GM13977 (cell line): ENCODE measurements at regions of chr5 and their contacts with region 1.

Region 1: GRCh38 chr5:108919591-108920326 is 172.1 kb downstream of the FER start:
- DNase-seq: peak; percentile 22
- CTCF ChIP-seq: peak; percentile 30

Region 2: DNA sequence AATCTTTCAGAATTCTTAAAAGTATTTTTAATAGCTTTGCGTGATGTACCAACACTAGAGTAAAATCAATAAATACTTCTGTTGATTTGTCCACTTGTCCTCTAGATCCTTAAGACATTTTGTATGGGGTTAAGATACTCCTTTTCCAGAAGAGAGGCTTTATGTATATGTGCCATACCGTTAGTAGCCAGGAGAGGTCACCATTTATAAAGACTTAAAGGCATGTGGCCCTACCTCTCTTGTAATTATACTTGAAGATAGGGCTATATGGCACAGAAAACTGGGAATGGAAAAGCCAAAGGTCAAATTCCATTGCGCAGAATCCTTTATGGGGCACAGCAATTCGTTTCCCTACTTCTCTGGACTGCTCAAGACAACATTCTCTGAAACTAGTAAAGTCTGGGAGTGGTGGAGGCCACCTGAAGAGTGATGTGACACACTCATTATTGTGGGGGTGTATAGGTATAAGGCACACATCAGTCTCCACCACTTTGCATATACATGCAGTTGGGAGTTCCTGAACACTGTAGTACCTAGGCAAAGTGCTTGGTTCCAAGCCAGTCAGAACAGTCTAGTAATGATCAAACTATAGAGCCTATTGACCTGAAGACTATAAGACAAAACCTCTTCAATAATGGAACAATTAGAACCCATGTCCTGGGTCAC is 397.8 kb before region 1 on chr5:
- in situ Hi-C with region 1: loop called (anchors 25 kb)
- DNase-seq: peak; percentile 37
- CTCF ChIP-seq: peak; percentile 60

Region 3: DNA sequence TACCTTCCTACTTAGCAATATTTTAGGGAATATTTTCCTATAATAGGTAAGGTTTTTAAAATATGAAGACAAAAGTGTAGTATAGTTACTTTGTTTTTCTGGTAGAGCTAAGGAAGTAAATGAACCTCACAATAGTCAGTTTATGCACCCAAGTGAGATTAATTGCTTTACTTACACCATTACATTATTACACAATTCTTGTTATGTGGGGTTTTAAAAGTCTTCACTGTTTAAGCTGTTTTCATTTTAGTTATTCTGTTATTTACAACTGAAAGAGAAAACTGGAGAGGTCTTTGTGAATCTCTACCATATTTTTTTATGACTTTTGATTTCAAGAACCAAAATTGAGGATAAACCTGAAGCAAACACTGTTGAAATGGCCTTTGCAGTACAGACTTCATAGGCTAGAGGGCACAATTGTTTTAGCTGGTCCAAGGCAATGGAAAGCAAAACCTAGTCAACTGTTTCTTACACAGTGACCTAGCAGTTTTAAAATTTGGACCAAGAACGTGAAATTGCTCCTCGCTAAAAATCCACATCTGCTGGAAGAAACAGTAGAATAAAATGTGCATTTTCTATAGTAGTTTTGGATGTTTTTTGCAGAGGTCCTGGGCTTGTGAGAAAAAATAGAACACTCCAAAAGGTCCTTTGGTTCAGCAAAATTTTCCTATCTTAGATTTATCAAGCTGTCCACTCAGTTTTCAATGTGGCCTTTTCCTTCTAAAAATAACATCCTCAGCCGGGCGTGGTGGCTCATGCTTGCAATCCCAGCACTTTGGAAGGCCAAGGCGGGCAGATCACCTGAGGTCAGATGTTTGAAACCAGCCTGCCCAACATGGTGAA is 238.5 kb before region 1 on chr5:
- in situ Hi-C with region 1: loop called (anchors 25 kb)
- DNase-seq: peak; percentile 71
- CTCF ChIP-seq: peak; percentile 79

Region 4: DNA sequence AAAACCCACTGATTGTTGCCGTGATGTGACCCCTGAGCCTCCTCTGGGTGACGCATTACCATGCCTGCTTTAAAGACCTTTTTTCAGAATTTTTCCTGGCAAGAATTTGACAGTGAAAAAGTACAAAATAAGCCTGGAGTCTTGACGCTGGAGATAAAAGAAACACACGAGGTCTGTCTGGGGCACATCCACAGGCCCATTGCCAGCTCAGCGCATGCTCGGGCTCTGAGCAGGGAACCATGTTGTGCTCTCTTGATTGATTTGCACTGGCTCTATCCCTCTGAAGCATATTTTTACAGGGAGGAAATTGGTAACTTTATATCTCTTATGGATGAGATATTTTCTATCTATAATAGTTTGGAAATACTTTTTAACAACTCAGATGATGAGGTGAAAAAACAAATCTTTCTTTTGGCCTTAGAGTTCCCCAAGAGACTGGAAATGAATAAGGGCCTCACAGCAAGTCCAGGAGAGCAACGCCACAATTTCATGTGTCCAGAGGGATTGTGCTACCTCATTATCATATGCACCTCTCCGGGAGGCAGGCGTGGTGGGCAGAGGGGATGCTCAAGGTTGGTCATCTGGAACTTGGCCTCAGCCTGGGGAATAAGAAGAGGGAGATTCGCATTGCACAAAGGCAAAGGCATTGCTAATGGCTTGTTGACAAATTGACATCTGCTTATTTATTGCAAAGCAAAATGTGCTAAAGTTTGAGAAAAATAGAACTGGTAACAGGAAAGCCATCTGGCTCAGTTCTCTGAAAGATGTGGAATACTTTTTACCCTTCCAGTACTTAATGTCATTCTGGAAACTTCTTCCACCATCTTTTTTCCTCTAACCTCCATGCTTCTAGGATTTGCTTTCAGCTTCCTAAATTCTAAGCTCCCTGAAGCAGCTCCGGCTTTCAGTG is 306.2 kb after region 1 on chr5:
- in situ Hi-C with region 1: no loop called
- DNase-seq: no peak
- CTCF ChIP-seq: no peak

Region 5: GRCh38 chr5:109468737-109469420 is 549.1 kb after region 1 on chr5:
- in situ Hi-C with region 1: loop called (anchors 25 kb)
- DNase-seq: peak; percentile 66
- CTCF ChIP-seq: peak; percentile 80